Posterior vena cava (tissue), 2 donors: ENCODE measurements at regions of chr2 and their contacts with region 1.

Region 1: DNA sequence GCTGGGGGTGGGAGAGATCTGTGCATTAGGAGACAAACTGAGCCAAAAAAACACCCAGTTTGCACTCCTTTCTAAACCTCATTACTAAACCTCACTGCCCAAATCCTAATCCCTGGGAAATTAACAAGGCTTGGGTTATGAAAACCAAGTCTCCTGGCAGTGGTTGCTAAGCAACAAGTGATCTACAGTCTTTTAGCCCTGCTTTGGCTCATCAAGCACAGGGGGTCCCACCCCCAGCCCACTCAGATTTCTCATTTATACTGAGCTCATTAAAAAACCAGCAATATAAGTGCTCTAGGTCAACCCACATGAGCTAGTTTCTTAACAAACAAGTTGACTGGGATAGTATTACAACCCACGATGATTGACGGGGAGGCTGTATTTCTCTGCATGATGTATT is 18.4 kb downstream of the DNER start:
- DNase-seq: no peak

Region 2: GRCh38 chr2:229650901-229651300 is 45.0 kb before region 1 on chr2:
- intact Hi-C with region 1: loop called in 1 of 2 experiments (anchors 1 kb)
- DNase-seq: no peak

Region 3: DNA sequence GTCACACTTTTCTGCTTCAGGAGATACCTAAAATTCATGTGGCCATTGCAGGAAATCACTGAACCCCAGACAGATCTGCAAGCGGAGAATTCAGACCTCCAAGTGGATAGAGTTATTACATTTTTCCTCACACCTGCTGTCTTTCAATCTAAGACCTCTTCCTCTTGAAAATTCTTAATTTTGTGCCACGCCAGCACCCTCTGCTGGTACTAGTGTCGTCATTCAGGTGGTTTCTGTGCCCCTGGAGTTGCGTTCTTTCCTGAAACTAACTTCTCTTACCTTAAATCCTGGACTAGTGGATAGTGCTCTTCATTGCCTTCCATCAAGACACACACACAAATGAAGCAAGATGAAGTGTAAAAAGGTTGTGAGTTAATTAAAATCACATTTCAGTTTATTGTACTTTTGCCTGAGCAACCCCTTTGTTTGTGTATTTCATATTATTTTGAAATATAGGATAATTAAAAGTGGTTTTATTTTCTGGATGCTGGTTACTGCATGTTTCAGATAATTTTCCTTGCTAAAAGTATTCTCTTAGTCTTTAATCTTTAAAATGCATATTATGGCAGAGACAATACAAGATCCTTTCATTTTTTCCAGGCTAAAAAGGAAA is 20.1 kb after region 1 on chr2:
- intact Hi-C with region 1: loop called in 1 of 2 experiments (anchors 1 kb)
- DNase-seq: no peak

Region 4: GRCh38 chr2:229728360-229728759 is 32.4 kb after region 1 on chr2:
- intact Hi-C with region 1: no loop called
- DNase-seq: no peak

Region 5: GRCh38 chr2:229780856-229781773 is 85.2 kb after region 1 on chr2:
- intact Hi-C with region 1: no loop called
- DNase-seq: no peak

Region 6: DNA sequence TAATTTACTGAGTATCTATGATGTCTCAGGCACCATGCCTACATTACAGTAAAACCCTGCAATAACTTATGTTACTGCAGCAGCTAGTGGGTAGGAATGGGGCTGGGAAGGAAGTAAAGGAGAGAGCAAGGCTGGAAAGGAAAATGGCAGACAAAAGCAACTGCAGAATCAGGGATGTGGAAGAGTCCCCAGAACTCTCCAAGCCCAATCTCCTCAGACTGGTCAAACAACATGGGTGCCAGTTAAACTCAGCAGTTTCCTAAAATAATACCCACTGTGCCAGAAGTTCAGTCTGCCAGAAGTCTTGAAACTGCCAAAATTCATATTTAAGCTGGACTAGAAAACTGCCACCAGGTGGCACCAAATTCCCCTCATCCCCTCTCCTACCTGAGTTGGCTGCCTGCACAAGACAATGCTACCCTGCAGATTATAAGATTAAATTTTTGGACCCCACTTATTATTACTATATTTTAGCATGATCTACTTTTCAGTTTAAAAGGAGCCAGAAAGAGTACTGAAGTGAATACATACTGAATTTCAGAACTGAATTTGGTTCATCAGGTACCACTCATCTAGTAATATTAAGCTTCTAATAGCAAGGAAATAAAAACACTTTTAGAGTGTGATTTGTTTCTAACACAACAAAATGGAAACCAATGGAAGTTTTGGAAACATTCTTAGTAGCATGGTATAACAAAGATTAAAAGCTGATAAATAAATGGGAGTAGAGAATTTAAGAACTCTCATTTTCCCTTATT is 105.2 kb after region 1 on chr2:
- intact Hi-C with region 1: no loop called
- DNase-seq: no peak